ENCODE measurements at regions of chr10 and their contacts with region 1.

Region 1: DNA sequence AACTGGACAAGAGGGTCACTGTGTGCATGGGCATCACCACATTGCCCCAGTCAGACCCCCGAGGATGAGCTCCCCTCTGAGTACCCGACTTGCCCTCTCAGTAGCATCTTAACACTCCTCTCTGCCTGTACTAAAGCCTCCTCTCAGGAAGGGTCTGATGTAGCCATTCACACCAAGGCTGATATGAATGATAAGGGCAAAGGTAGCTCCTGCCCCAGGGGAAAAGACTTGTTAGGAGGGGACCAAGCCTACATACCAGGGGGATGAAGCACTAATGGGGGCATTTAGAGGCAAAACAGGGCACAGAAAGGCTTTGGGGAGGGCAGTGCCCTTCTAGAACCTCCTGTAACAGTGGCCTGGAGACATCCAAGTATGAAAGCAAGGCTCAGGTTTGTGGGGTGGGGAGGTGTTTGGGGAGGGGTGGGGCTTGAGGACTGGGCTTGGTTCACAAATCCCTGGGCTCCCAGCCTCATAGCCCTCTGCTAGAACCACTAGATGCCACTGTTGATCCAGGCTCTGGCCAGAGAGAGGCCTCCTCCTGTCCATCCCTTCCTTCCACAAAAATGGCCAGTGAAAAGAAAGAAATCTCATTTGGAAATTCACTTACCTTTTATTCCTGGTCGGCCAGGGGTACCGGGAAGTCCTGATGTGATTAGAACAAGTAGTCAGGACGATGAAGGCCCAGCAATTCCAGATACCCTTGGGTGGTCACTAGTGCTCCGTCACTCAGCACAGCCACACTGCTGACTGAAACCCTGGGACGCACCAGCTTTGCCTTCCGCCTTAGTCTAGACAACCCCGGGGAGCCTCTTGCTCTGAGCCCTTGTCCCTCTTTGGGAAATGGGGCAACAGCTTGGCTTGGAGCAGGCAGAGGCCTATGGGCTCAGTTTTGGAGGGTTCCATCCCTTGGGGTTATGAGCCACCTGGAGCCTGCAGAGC is 40.3 kb downstream of the COL17A1 start:
- DNase-seq: peak in 1 of 2 donors; percentile 38
- ATAC-seq: peak; percentile 66 to 90 (median 76)
- H3K4me3 ChIP-seq: no peak overlapping the region
- H3K27ac ChIP-seq: no peak overlapping the region
- H3K4me1 ChIP-seq: peaks cover 0 to 12% (median 0%) of the 10 kb centered on the region in 9 donors
- H3K27me3 ChIP-seq: no peaks in the 10 kb centered on the region
- CTCF ChIP-seq: peak; percentile 22 to 70 (median 61)

Region 2: DNA sequence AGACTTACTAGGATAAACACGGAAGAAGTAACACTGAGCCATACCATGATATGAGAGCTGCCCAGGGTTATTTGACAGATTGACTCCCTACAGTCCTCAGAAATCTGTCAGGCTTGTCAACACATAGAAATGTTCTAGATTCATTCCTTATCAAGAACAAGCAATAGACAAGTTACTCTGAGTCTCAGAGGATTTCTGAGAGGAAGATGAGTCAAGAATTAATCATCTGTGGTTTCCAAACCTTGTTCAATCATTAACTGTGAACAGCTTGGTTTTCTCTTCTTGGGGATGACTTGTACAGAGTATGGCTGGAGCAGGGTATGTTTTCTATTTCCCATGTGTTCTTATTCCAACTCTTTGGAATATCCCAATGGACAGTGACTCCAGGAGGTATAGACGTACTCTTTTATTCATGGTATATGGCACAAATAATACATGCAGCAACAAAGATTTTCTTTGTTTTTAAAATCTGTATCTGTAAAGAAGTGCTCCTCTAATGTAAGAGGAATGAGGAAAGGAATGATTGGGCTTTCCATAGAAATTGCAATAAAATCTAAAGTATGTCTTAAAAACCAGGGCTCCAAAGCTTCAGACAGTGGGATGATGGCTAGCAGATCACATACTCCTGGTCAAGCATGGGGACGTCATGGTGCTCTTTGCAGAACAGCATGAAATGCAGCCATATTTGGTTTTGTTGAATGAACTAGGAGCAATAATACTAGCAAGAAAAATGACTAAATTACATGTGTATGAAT is 64.7 kb after region 1 on chr10:
- intact Hi-C with region 1: loop called in 1 of 10 experiments (anchors 10 kb)
- DNase-seq: no peak
- ATAC-seq: no peak
- H3K4me3 ChIP-seq: no peak overlapping the region
- H3K27ac ChIP-seq: no peak overlapping the region
- H3K4me1 ChIP-seq: peaks cover 0 to 5% (median 0%) of the 10 kb centered on the region in 9 donors
- H3K27me3 ChIP-seq: peaks cover 0 to 6% (median 0%) of the 10 kb centered on the region in 7 donors
- CTCF ChIP-seq: no peak

Region 3: GRCh38 chr10:104209575-104210198 is 164.3 kb after region 1 on chr10:
- intact Hi-C with region 1: loop called (anchors 2 to 10 kb)
- DNase-seq: peak in 1 of 2 donors; percentile 35
- ATAC-seq: peak in 5 of 8 donors; percentile 47 to 77 (median 61)
- H3K4me3 ChIP-seq: no peak overlapping the region
- H3K27ac ChIP-seq: no peak overlapping the region
- H3K4me1 ChIP-seq: peaks cover 0 to 7% (median 0%) of the 10 kb centered on the region in 9 donors
- H3K27me3 ChIP-seq: peaks cover 0 to 3% (median 0%) of the 10 kb centered on the region in 7 donors
- CTCF ChIP-seq: peak in 8 of 9 donors; percentile 14 to 71 (median 66)

Region 4: DNA sequence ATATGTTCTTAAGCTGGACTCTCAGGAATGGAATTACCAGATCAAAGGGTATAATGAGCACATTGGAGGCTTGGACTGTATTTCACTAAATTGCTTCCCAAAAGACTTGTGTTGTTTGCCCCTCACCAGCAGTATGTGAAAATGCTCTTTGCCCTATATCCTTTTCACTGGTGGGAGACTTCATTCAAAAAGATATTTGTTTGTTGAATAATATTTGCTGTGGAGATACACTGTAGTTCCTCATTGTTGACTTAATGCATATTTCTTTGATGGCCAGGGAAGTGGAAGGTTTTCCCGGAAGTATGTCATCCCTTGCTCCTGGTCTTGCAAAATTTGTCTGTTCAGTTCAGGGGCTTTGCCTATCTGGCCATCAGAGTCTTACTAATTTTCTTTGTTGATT is 242.9 kb after region 1 on chr10:
- intact Hi-C with region 1: no loop called
- DNase-seq: no peak
- ATAC-seq: no peak
- H3K4me3 ChIP-seq: no peak overlapping the region
- H3K27ac ChIP-seq: no peak overlapping the region
- H3K4me1 ChIP-seq: peaks cover 0 to 23% (median 9%) of the 10 kb centered on the region in 9 donors
- H3K27me3 ChIP-seq: peaks cover 0 to 6% (median 0%) of the 10 kb centered on the region in 7 donors
- CTCF ChIP-seq: no peak